Left colon (tissue), 2 donors: ENCODE measurements at regions of chr1 and their contacts with region 1.

Region 1: GRCh38 chr1:109548321-109549267 is at the start of gene GNAI3:
- DNase-seq: peak; percentile 98
- ATAC-seq: peak; percentile 94
- total RNA-seq, gene GNAI3: 7.0 to 7.7 TPM

Region 2: GRCh38 chr1:109493805-109494539 is 54.6 kb before region 1 on chr1 and contains the start of gene CYB561D1:
- intact Hi-C with region 1: no loop called
- DNase-seq: peak; percentile 85 to 87
- ATAC-seq: peak; percentile 93
- total RNA-seq, gene CYB561D1: 10.0 to 18.7 TPM

Region 3: GRCh38 chr1:109620841-109621286 is 72.3 kb after region 1 on chr1:
- intact Hi-C with region 1: loop called in 1 of 2 experiments (anchors 5 kb)
- DNase-seq: peak; percentile 95 to 97
- ATAC-seq: peak; percentile 74

Region 4: DNA sequence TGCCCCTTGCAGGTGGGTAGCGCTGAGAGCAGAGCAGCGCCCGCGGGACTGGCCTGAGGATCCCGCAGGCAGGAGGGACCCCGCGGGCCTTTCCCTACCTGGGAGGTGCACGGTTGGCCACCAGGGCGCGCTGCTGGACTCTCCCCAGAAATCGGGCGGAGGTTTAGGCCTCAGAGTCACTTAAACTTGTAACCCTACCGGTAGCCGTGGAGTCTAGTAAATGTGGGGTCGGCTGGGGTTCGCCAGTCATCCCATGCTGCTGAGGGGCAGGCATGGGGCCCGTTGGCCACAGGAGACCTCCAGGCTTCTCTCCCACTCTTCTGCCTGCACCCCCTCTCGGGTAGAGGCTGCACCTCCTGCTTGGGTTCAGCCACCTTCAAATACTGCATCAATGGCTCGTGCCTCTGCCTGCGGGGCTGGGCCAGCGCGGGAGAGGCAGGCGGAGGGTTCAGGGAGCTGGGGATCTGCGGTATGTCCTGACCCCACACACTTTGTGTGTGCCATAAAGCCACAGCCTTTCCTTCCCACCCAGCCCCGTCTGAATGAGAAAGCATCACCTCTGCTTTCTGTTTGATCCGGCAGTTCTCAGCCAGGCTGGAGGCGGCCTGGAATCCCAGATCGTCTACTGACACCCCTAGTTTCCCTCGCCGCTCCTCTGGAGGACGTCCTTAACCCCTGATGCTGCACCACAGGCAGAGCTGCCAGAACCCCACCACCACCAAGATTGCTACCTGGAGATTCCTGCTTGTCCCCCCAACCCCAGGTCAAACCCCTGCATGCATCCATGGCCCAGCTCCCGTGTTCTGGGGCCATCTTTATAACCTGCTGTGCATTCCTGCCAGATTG is 95.0 kb after region 1 on chr1:
- intact Hi-C with region 1: loop called in 1 of 2 experiments (anchors 5 kb)
- DNase-seq: peak; percentile 78 to 94
- ATAC-seq: peak; percentile 88

Region 5: GRCh38 chr1:109773146-109773899 is 224.7 kb after region 1 on chr1:
- intact Hi-C with region 1: loop called in 1 of 2 experiments (anchors 2 kb)
- DNase-seq: peak; percentile 80 to 85
- ATAC-seq: peak; percentile 84

Region 6: GRCh38 chr1:109984456-109985275 is 436.1 kb after region 1 on chr1 and contains the start of gene AHCYL1:
- intact Hi-C with region 1: loop called in 1 of 2 experiments (anchors 10 kb)
- DNase-seq: peak; percentile 99 to 100
- ATAC-seq: peak; percentile 95
- total RNA-seq, gene AHCYL1: 90.7 to 95.1 TPM